Heart left ventricle (tissue), 16 donors: ENCODE measurements at regions of chr7 and their contacts with region 1.

Region 1: GRCh38 chr7:26090927-26091519 is 61.0 kb upstream of the NFE2L3 start:
- DNase-seq: no peak
- ATAC-seq: peak in 3 of 4 donors; percentile 45 to 64 (median 51)
- H3K4me3 ChIP-seq: peak overlapping the region in 1 of 12 donors; percentile 4
- H3K27ac ChIP-seq: no peak overlapping the region
- H3K4me1 ChIP-seq: peaks cover 0 to 6% (median 0%) of the 10 kb centered on the region in 12 donors
- H3K27me3 ChIP-seq: peaks cover 0 to 6% (median 0%) of the 10 kb centered on the region in 9 donors
- CTCF ChIP-seq: peak; percentile 47 to 75 (median 63)
- POLR2A ChIP-seq: no peak

Region 2: GRCh38 chr7:26029911-26030310 is 61.1 kb before region 1 on chr7:
- intact Hi-C with region 1: no loop called
- DNase-seq: no peak
- ATAC-seq: no peak
- H3K4me3 ChIP-seq: no peak overlapping the region
- H3K27ac ChIP-seq: no peak overlapping the region
- H3K4me1 ChIP-seq: no peaks in the 10 kb centered on the region
- H3K27me3 ChIP-seq: peaks cover 0 to 3% (median 0%) of the 10 kb centered on the region in 9 donors
- CTCF ChIP-seq: no peak
- POLR2A ChIP-seq: no peak

Region 3: GRCh38 chr7:26365077-26365900 is 274.3 kb after region 1 on chr7:
- intact Hi-C with region 1: loop called (anchors 1 to 5 kb)
- DNase-seq: peak in 2 of 5 donors; percentile 31 to 40
- ATAC-seq: peak; percentile 47 to 87 (median 84)
- H3K4me3 ChIP-seq: no peak overlapping the region
- H3K27ac ChIP-seq: no peak overlapping the region
- H3K4me1 ChIP-seq: peaks cover 0 to 15% (median 0%) of the 10 kb centered on the region in 12 donors
- H3K27me3 ChIP-seq: peaks cover 0 to 44% (median 12%) of the 10 kb centered on the region in 9 donors
- CTCF ChIP-seq: peak; percentile 36 to 84 (median 74)
- POLR2A ChIP-seq: no peak